ENCODE measurements at regions of chr11 and their contacts with region 1.

Region 1: DNA sequence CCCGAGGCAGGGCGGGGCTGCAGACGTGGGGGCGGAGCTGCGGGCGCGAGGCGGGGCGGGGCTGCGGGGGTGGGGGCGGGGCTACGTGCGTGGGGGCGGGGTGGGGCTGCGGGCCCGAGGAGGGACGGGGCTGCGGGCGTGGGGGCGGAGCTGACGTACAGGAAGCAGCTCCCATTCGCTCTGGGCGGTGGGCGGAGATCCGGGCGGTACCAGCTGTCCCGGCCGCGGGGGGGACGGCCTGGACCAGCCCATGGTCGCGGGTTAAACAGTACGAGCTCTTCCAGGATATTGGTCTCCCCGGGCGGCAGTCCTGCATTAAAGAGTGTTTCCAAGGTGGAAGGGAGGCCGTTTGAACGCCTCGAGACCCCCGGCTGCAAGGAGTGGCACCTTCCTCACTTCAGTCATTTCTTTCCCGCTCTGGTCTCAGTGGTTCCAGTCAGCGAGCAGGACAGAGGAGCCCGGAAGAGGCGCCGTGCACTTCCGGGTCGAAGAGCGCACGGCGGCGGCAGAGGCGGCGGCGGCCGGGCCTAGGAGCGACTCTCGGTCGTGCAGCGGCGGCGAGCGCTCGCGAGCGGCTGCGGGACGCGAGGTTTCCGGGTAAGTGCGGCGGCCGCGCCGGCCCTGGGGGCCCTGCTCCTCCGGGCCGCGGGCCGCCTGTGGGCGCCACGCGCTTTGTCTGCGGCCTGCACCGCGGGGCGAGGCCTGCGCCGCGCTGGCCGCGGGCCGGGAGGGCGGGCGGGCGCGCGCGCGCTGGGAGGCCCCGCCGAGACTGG is at the start of gene PHRF1:
- DNase-seq: peak; percentile 99
- H3K4me3 ChIP-seq: peak within 1 kb of the TSS; percentile 76 to 90 (median 83)
- H3K27ac ChIP-seq: peak within 1 kb of the TSS; percentile 83 to 94 (median 88)
- H3K4me1 ChIP-seq: peaks cover 0 to 56% (median 51%) of the 10 kb centered on the region in 4 donors
- H3K27me3 ChIP-seq: peaks cover 0 to 12% (median 6%) of the 10 kb centered on the region in 3 donors
- CTCF ChIP-seq: no peak
- EP300 ChIP-seq: peak in 2 of 4 donors; percentile 10 to 14
- POLR2A ChIP-seq: peak; percentile 28 to 36
- total RNA-seq, gene PHRF1: 11.8 to 21.2 (median 17.9) TPM

Region 2: DNA sequence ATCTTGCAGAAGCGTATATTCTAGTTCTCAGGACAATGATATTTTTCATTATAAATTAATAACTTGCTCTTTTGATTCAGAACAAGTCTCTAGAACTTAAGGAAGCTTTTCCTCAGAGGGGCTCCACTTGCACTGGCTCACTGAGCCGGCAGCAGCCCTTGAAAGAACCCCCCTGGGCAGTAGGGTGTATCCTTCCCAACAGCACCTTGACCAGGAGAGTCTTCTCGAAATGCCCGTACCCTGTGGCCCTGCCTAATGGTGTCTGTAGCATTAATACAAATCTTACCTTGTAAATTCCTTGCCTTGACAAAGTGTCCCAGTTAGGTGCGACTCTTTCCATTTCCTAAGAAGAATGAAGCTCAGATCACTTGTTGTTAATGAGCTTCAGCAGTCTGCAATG is 325.9 kb before region 1 on chr11:
- intact Hi-C with region 1: no loop called
- DNase-seq: no peak
- H3K4me3 ChIP-seq: no peak overlapping the region
- H3K27ac ChIP-seq: no peak overlapping the region
- H3K4me1 ChIP-seq: no peaks in the 10 kb centered on the region
- H3K27me3 ChIP-seq: no peaks in the 10 kb centered on the region
- CTCF ChIP-seq: no peak
- EP300 ChIP-seq: no peak
- POLR2A ChIP-seq: no peak

Region 3: GRCh38 chr11:615504-616319 is 39.5 kb after region 1 on chr11 and contains the start of gene IRF7:
- intact Hi-C with region 1: loop called (anchors 5 kb)
- DNase-seq: peak; percentile 97
- H3K4me3 ChIP-seq: peak within 1 kb of the TSS; percentile 61 to 72 (median 66)
- H3K27ac ChIP-seq: peak within 1 kb of the TSS; percentile 82 to 95 (median 87)
- H3K4me1 ChIP-seq: peaks cover 0 to 33% (median 27%) of the 10 kb centered on the region in 4 donors
- H3K27me3 ChIP-seq: no peaks in the 10 kb centered on the region
- CTCF ChIP-seq: no peak
- EP300 ChIP-seq: no peak
- POLR2A ChIP-seq: peak; percentile 41 to 66
- total RNA-seq, gene IRF7: 8.6 to 18.2 (median 14.2) TPM

Region 4: GRCh38 chr11:695538-696248 is 119.5 kb after region 1 on chr11 and contains the start of gene TMEM80:
- intact Hi-C with region 1: loop called (anchors 5 kb)
- DNase-seq: peak; percentile 100
- H3K4me3 ChIP-seq: peak within 1 kb of the TSS; percentile 78 to 98 (median 92)
- H3K27ac ChIP-seq: peak within 1 kb of the TSS; percentile 98 to 100 (median 99)
- H3K4me1 ChIP-seq: peaks cover 0 to 46% (median 41%) of the 10 kb centered on the region in 4 donors
- H3K27me3 ChIP-seq: no peaks in the 10 kb centered on the region
- CTCF ChIP-seq: no peak
- EP300 ChIP-seq: no peak
- POLR2A ChIP-seq: peak in 1 of 2 donors; percentile 20
- total RNA-seq, gene TMEM80: 20.9 to 41.5 (median 39.6) TPM